CD8-positive, alpha-beta T cell (primary cell): ENCODE measurements at regions of chr11 and their contacts with region 1.

Region 1: GRCh38 chr11:6251120-6251733 is 8.4 kb upstream of the CCKBR start:
- DNase-seq: peak in 7 of 9 experiments; percentile 14 to 59 (median 47)
- ATAC-seq: peak; percentile 83
- H3K4me3 ChIP-seq: no peak overlapping the region
- H3K4me3 Mint-ChIP-seq: no peak overlapping the region
- H3K27ac ChIP-seq: no peak overlapping the region
- H3K27ac Mint-ChIP-seq: no peak overlapping the region
- H3K4me1 ChIP-seq: no peaks in the 10 kb centered on the region
- H3K4me1 Mint-ChIP-seq: no peaks in the 10 kb centered on the region
- H3K27me3 ChIP-seq: no peaks in the 10 kb centered on the region
- H3K27me3 Mint-ChIP-seq: no peaks in the 10 kb centered on the region
- CTCF ChIP-seq: peak; percentile 56

Region 2: GRCh38 chr11:6268820-6269219 is 17.6 kb after region 1 on chr11:
- CTCF ChIA-PET with region 1: interaction called, 16 read pairs
- POLR2A ChIA-PET with region 1: no interaction called
- intact Hi-C with region 1: no loop called
- DNase-seq: no peak
- ATAC-seq: no peak
- H3K4me3 ChIP-seq: no peak overlapping the region
- H3K4me3 Mint-ChIP-seq: no peak overlapping the region
- H3K27ac ChIP-seq: no peak overlapping the region
- H3K27ac Mint-ChIP-seq: no peak overlapping the region
- H3K4me1 ChIP-seq: no peaks in the 10 kb centered on the region
- H3K4me1 Mint-ChIP-seq: no peaks in the 10 kb centered on the region
- H3K27me3 ChIP-seq: peaks cover 2 to 4% of the 10 kb centered on the region in 2 experiments
- H3K27me3 Mint-ChIP-seq: peaks cover 31% of the 10 kb centered on the region
- CTCF ChIP-seq: no peak

Region 3: GRCh38 chr11:6362873-6363678 is 111.8 kb after region 1 on chr11:
- CTCF ChIA-PET with region 1: interaction called, 27 read pairs
- POLR2A ChIA-PET with region 1: no interaction called
- intact Hi-C with region 1: no loop called
- DNase-seq: peak; percentile 41 to 74 (median 64)
- ATAC-seq: peak; percentile 93
- H3K4me3 ChIP-seq: no peak overlapping the region
- H3K4me3 Mint-ChIP-seq: no peak overlapping the region
- H3K27ac ChIP-seq: no peak overlapping the region
- H3K27ac Mint-ChIP-seq: no peak overlapping the region
- H3K4me1 ChIP-seq: no peaks in the 10 kb centered on the region
- H3K4me1 Mint-ChIP-seq: no peaks in the 10 kb centered on the region
- H3K27me3 ChIP-seq: no peaks in the 10 kb centered on the region
- H3K27me3 Mint-ChIP-seq: no peaks in the 10 kb centered on the region
- CTCF ChIP-seq: peak; percentile 53